Activated naive CD4-positive, alpha-beta T cell treated with anti-CD3 and anti-CD28 coated beads, Interleukin-2, amount 10 ng/mL, durations not matched to agents 7 days and 5 days (primary cell): ENCODE measurements at regions of chr5 and their contacts with region 1.

Region 1: DNA sequence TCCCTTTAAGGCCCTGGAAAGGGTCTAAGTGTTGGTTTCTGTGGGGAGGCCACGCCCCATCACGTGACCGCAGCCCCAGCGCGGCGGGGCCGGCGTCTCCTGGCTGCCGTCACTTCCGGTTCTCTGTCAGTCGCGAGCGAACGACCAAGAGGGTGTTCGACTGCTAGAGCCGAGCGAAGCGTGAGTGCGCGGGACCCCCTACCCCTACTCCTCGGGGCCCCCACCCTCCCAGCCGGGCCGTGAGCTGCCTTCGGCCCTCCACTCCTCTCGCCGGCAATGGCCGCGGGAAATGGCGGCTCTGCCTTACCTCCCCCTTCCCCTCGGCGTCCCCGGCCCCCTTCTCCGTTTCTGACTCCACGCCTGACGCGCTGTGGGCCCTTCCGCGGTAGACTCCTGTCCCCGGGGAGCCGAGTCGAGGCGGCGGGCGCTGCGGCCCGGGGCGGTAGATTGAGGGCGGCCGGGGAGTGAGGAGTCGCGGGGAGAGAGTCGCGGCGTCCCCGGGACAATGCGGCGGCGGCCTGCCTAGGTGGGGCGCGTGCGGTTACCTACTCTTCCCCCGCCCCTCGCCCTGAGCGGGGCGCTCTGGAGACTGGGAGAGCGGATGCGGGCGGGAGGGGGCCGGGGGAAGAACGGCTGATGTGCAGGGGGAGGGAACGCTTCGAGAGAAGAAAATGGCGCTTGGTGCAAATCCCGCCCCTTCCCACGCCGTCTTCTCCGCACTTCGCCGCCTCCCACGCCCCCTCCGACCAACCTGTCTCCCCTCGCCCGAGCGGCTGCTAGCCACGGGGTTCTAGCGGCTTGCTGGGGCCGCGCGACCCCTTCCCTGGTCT is at the start of gene SUB1:
- DNase-seq: peak; percentile 95
- H3K4me3 Mint-ChIP-seq: peak within 1 kb of the TSS; percentile 90
- H3K27ac Mint-ChIP-seq: peak within 1 kb of the TSS; percentile 95
- H3K4me1 Mint-ChIP-seq: peaks cover 69% of the 10 kb centered on the region
- H3K27me3 Mint-ChIP-seq: peaks cover 5% of the 10 kb centered on the region

Region 2: DNA sequence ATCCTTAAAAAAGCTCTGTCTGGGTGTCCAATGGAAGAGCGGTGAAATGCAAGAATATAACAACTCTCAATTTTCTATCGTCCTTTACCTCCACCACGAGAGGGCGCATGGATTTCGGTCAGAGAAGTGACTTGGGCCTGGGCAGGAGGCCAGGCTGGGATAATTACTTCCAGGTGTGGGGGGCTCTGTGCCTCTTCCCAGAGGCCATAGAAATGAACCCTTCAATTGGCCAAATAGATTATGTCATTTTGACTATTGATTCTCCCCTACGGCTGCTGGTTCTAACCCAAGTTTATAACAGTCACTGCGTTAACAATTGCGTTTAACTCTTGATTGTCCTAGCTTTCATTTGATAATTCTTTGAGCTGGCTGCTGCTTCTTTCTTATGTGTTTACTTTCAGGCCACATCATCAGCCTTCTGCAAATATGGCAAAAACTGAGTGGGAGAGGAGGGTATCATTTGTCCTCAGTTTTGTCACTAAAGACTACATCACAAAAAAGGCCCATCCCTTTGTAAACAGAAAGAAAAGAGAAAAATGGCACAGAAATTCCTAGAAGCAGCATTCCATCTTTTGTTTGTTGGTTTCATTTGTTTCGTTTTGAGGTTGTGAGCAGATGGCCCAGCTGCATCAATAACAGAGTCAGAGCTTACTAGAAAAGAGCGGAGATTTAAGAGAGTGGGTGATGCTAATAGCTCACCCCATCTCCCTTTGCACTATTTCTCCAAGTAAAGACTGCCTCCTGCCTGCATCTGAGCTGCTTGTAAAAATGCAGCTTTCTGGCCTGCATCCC is 95.7 kb before region 1 on chr5:
- CTCF ChIA-PET with region 1: interaction called, 265 read pairs
- DNase-seq: peak; percentile 79
- H3K4me3 Mint-ChIP-seq: no peak overlapping the region
- H3K27ac Mint-ChIP-seq: no peak overlapping the region
- H3K4me1 Mint-ChIP-seq: no peaks in the 10 kb centered on the region
- H3K27me3 Mint-ChIP-seq: no peaks in the 10 kb centered on the region

Region 3: DNA sequence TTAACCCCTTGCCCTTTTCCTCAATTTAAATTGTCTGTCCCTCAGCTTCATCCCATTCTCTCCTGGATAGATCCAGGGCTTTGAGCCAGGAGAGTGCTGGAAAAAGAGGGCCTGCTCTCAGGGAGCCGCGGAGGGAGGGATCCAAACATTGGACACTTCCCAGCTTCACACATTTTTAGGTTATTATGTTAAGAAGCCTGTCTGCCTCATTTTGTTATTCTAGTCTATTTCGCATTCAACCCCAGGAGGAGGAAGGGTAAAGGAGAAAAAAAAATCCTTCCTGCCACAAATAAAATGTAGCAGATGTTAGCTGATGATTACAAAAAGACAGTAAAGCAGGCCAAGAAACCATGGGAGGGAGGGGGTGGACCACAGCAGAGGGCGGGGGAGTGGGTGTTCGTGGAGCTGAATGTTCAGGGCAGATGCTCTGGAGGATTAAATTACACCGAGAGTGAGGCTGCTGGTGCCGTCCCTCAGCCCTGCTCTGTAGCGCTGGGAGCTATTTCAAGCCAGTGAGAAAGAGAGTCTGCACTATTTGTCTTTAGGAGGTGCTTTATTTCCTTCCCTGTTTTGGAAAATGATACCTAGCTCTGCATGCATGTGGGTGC is 80.6 kb before region 1 on chr5:
- CTCF ChIA-PET with region 1: interaction called, 16 read pairs
- DNase-seq: no peak
- H3K4me3 Mint-ChIP-seq: no peak overlapping the region
- H3K27ac Mint-ChIP-seq: no peak overlapping the region
- H3K4me1 Mint-ChIP-seq: peaks cover 9% of the 10 kb centered on the region
- H3K27me3 Mint-ChIP-seq: peaks cover 35% of the 10 kb centered on the region

Region 4: DNA sequence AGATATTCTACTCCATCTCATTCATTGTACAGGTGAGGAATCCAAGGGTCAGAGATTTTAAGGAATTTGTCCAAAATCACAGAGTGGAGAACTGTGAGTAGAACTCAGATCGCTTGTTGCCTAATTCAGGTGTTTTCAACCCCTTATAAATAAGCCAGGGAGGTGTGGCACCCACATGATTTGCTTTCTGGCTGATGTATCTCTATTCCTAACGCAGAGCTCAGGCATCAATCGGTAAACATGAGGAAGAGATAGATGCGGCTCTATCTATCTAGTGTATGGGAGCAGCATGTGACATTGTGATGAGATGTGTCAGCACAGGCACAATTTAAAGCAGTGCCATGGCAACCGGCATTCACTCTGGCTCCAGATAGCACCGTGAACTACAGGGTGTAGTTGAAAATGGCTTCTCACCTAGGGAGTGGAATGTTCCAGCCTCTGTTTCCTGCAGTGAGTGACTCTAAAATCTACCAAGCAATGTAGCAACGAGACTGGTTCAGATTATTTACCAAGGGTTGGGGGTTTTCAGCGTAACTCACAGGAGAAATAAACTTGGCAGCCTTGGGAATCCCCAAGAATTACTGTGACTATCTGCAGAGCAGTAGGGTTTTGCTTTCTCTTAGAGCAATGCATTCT is 53.7 kb before region 1 on chr5:
- CTCF ChIA-PET with region 1: interaction called, 10 read pairs
- DNase-seq: peak; percentile 60
- H3K4me3 Mint-ChIP-seq: peak overlapping the region; percentile 72
- H3K27ac Mint-ChIP-seq: peak overlapping the region; percentile 90
- H3K4me1 Mint-ChIP-seq: peaks cover 54% of the 10 kb centered on the region
- H3K27me3 Mint-ChIP-seq: no peaks in the 10 kb centered on the region

Region 5: DNA sequence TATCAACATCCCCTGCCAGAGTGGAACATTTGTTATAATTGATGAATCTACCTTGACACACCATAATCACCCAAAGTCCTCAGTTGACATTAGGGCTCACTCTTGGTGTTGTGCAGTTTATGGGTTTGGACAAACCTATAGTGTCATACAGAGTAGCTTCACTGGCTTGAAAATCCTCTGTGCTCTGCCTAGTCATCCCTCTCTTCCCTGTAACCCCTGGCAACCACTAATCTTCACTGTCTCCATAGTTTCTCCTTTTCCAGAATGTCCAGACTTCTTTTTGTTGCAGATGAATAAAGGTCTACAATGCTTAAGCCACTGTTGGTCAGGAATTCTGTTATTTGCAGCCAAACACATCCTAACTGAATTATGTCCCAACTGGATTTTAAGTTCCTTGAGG is 22.8 kb before region 1 on chr5:
- CTCF ChIA-PET with region 1: no interaction called
- DNase-seq: no peak
- H3K4me3 Mint-ChIP-seq: no peak overlapping the region
- H3K27ac Mint-ChIP-seq: no peak overlapping the region
- H3K4me1 Mint-ChIP-seq: peaks cover 2% of the 10 kb centered on the region
- H3K27me3 Mint-ChIP-seq: no peaks in the 10 kb centered on the region

Region 6: DNA sequence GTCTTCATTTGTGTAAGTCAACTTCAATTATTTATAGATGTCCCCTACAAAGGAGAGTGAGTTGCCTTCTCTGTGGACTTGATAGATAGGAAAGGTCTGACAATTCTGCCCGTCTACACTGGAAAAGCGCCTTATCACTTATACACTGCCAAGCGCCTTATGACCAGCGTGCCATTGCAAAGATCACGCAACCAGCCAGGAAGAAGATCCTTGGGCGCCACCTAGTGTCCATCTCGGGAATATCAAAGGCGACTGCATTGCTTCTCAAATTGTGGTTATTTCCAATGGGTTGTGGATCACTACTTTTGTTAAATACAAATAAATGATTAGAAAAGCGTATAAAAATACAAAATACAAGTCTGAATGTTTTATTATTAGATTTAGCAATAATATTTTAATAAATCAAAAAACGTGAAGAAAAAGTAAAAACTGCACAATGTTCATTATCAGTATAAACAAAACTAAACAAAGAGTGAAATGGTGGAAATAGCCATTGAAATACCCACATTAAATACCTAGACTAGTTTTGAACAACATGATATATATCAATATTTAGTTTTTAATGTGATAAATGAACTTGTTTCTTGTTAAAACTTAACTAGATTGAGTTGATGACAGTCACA is 27.5 kb after region 1 on chr5:
- CTCF ChIA-PET with region 1: interaction called, 24 read pairs
- DNase-seq: peak; percentile 88
- H3K4me3 Mint-ChIP-seq: no peak overlapping the region
- H3K27ac Mint-ChIP-seq: no peak overlapping the region
- H3K4me1 Mint-ChIP-seq: peaks cover 2% of the 10 kb centered on the region
- H3K27me3 Mint-ChIP-seq: no peaks in the 10 kb centered on the region

Region 7: GRCh38 chr5:32740651-32741050 is 155.0 kb after region 1 on chr5:
- CTCF ChIA-PET with region 1: no interaction called
- DNase-seq: no peak
- H3K4me3 Mint-ChIP-seq: no peak overlapping the region
- H3K27ac Mint-ChIP-seq: no peak overlapping the region
- H3K4me1 Mint-ChIP-seq: no peaks in the 10 kb centered on the region
- H3K27me3 Mint-ChIP-seq: no peaks in the 10 kb centered on the region